T-cell (primary cell): ENCODE measurements at regions of chr13 and their contacts with region 1.

Region 1: GRCh38 chr13:58313219-58313618 is 681.7 kb downstream of the PCDH17 start:
- DNase-seq: no peak
- ATAC-seq: no peak
- H3K4me3 ChIP-seq: no peak overlapping the region
- H3K4me3 Mint-ChIP-seq: no peak overlapping the region
- H3K27ac ChIP-seq: no peak overlapping the region
- H3K27ac Mint-ChIP-seq: no peak overlapping the region
- H3K4me1 ChIP-seq: no peaks in the 10 kb centered on the region
- H3K4me1 Mint-ChIP-seq: no peaks in the 10 kb centered on the region
- H3K27me3 ChIP-seq: no peaks in the 10 kb centered on the region
- H3K27me3 Mint-ChIP-seq: no peaks in the 10 kb centered on the region

Region 2: DNA sequence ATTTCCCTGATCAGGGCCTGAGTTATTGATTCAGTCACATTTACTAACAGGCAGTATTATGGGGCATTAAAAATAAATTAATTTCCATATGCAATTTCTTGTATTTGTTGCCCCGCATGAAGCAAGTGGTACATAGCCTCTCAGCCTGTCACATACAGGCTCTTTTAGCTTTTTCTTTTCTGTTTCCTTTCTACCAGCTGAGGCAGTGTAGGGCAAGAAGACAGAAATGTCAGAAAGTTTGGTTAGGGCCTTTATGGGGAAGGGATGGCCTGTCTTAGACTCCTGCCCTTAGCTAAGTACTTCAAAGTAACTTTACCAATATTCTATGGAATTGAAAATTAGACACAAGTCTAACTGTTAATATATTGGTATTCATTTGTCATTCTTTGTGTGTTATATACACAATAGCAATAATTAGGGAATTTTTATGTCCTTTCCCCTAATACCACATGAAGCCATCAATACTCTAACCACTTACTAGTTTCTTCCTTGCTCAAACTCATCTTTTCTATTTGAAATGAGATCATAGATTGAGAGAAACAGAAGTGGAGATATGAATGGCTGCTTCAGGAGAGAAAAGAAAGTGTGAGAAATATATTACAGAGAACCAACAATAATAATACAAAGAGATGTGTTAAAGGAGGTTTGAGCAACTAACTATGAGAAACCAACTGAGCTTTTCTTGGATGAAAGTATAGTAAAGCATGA is 12.1 kb before region 1 on chr13:
- CTCF ChIA-PET with region 1: interaction called in 1 of 2 experiments, 11 read pairs
- POLR2A ChIA-PET with region 1: no interaction called
- DNase-seq: no peak
- ATAC-seq: no peak
- H3K4me3 ChIP-seq: no peak overlapping the region
- H3K4me3 Mint-ChIP-seq: no peak overlapping the region
- H3K27ac ChIP-seq: no peak overlapping the region
- H3K27ac Mint-ChIP-seq: no peak overlapping the region
- H3K4me1 ChIP-seq: no peaks in the 10 kb centered on the region
- H3K4me1 Mint-ChIP-seq: no peaks in the 10 kb centered on the region
- H3K27me3 ChIP-seq: no peaks in the 10 kb centered on the region
- H3K27me3 Mint-ChIP-seq: no peaks in the 10 kb centered on the region